ENCODE measurements at regions of chr1 and their contacts with region 1.

Region 1: DNA sequence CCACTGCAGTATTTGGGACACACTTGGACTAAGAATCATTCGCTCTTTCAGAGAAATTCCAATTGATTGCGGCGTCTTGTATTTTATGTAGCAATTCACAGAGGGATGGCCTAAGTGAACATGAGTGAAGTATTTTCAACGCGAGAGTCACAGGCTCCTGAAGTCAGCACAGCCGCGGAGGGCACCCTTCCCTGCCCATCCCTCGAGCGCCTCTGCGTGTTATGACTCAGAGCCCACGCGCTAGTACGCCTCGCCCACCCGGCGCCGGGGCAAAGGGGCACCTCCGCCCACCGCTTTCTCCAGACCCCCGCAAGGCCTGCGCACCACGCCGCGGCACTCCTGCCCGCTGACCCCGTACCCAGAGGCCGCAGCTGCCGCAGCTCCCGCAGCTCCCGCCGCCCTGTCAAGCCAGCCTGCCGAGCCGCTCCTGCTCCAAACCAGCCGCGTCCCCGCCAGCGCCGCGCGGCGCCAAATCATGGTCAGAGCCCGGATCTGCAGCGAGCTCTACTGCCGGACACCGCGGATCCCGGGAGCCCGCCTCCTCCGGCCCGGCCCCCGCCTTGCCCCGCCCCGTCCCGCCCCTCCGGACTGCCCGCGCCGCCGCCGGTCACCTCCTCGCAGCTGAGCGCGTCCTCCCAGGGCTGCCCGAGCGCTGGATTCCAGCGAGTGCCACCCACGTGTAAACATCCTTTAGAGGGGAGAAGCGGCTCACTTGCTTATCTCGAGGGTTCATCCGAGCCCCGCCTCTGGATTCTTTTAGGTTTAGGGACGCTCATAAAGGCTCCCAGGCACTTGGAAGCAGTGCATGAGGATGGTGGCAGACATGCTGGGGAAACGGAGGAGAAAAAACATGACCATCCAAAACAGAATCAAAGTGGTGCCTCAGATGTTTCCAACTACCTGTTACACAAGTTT is at the start of gene GLRX2:
- DNase-seq: peak; percentile 66
- ATAC-seq: peak; percentile 96
- H3K4me3 ChIP-seq: peak within 1 kb of the TSS; percentile 70 to 93 (median 82)
- H3K27ac ChIP-seq: peak within 1 kb of the TSS; percentile 89
- H3K4me1 ChIP-seq: peaks cover 56% of the 10 kb centered on the region
- H3K27me3 ChIP-seq: no peaks in the 10 kb centered on the region; a peak in 1 of 5 replicates
- CTCF ChIP-seq: peak; percentile 37
- EP300 ChIP-seq: peak in 1 of 2 experiments; percentile 39; a peak in 1 of 4 replicates
- POLR2A ChIP-seq: peak; percentile 79 to 86
- RAD21 ChIP-seq: peak; percentile 69
- total RNA-seq, gene GLRX2: 39.0 and 42.1 TPM in 2 replicates

Region 2: DNA sequence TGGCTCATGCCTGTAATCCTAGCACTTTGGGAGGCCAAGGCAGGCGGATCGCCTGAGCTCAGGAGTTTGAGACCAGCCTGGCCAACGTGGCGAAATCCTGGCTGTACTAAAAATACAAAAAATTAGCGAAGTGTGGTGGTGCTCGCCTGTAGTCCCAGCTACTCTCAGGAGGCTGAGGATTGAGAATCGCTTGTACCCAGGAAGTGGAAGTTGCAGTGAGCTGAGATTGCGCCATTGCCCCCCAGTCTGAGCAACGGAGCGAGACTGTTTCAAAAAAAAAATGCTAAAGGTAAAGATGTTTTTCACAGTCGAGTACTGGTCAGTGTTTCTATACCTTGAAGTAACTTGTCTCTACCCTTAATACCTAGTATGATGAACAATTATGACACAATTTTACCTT is 11.1 kb before region 1 on chr1:
- CTCF ChIA-PET with region 1: no interaction called
- POLR2A ChIA-PET with region 1: interaction called, 10 read pairs
- in situ Hi-C with region 1: no loop called
- intact Hi-C with region 1: no loop called
- DNase-seq: no peak
- ATAC-seq: no peak
- H3K4me3 ChIP-seq: no peak overlapping the region
- H3K27ac ChIP-seq: no peak overlapping the region
- H3K4me1 ChIP-seq: no peaks in the 10 kb centered on the region
- H3K27me3 ChIP-seq: no peaks in the 10 kb centered on the region
- CTCF ChIP-seq: no peak
- EP300 ChIP-seq: no peak
- POLR2A ChIP-seq: no peak
- RAD21 ChIP-seq: no peak

Region 3: DNA sequence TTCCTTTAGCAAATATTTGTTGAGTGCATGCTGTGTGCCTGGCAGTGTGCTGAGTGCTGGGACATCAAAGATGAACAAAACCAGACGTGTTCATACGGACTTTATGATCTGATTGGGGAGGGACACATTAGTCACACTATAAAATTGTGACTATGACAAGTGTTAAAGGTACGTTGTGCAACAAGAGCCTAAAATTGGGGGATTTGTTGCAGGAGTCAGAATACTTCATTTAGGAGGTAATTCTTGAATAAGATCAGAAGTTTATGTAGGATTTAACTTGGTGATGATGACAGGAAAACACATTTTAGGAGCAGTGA is 51.6 kb after region 1 on chr1:
- CTCF ChIA-PET with region 1: no interaction called
- POLR2A ChIA-PET with region 1: no interaction called
- in situ Hi-C with region 1: no loop called
- intact Hi-C with region 1: no loop called
- DNase-seq: no peak
- ATAC-seq: no peak
- H3K4me3 ChIP-seq: no peak overlapping the region
- H3K27ac ChIP-seq: no peak overlapping the region
- H3K4me1 ChIP-seq: peaks cover 20% of the 10 kb centered on the region
- H3K27me3 ChIP-seq: no peaks in the 10 kb centered on the region
- CTCF ChIP-seq: no peak
- EP300 ChIP-seq: no peak
- POLR2A ChIP-seq: no peak
- RAD21 ChIP-seq: no peak

Region 4: GRCh38 chr1:193183019-193183627 is 78.0 kb after region 1 on chr1:
- CTCF ChIA-PET with region 1: no interaction called
- POLR2A ChIA-PET with region 1: no interaction called
- in situ Hi-C with region 1: no loop called
- intact Hi-C with region 1: no loop called
- DNase-seq: peak; percentile 39
- ATAC-seq: peak; percentile 70
- H3K4me3 ChIP-seq: no peak overlapping the region; a peak in 1 of 6 replicates
- H3K27ac ChIP-seq: no peak overlapping the region
- H3K4me1 ChIP-seq: peaks cover 16% of the 10 kb centered on the region
- H3K27me3 ChIP-seq: no peaks in the 10 kb centered on the region
- CTCF ChIP-seq: peak; percentile 64
- EP300 ChIP-seq: no peak
- POLR2A ChIP-seq: no peak
- RAD21 ChIP-seq: no peak

Measured in HepG2 (cell line).